Left ventricle myocardium superior (tissue), 1 donor: ENCODE measurements at regions of chr5 and their contacts with region 1.

Region 1: DNA sequence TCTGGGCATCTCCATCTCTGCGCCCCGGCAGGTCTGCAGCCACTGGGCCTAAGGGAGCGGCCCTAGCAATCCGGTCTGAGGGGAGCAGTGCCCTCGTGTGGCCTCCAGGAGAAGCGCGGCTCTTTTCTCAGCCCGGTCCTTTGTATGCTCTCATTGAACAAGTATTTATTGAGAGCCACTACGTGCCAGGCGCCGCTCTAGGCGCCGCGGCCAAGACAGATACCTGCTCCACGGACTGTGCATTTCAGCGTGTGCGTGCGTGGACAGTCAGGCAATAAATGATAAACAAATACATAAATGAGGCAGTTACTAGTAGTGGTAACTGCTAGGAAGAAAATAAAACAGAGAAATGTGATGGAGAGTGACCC is 2.3 kb upstream of the SLC4A9 start:
- DNase-seq: peak; percentile 86
- ATAC-seq: peak; percentile 92

Region 2: GRCh38 chr5:140174465-140175366 is 183.0 kb before region 1 on chr5 and contains the start of gene CYSTM1:
- intact Hi-C with region 1: loop called (anchors 10 kb)
- DNase-seq: peak; percentile 99
- ATAC-seq: peak; percentile 94
- total RNA-seq, gene CYSTM1: 58.2 TPM

Region 3: DNA sequence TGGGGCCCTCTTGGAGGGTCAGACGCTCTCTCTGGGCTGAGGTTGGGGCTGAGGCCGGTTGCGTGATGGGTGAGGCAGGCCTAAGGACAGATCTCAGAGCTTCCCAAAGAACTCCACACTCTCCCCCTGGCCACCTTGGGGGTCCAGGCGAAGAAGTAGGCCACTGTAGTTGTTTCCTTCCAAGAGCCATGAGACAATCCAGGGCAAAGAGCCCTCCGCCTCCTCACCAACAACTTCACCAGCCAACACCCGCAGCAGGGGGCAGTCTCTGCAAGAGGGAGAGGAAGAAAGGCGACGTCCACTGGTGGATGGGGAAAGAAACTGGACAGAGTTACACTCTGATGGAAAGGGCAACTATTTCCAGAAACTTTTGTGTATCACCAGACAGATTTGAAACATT is 217.6 kb after region 1 on chr5:
- intact Hi-C with region 1: no loop called
- DNase-seq: peak; percentile 65
- ATAC-seq: peak; percentile 57

Region 4: GRCh38 chr5:140609126-140609525 is 251.4 kb after region 1 on chr5:
- intact Hi-C with region 1: no loop called
- DNase-seq: peak; percentile 46
- ATAC-seq: peak; percentile 76